ENCODE measurements at regions of chr1 and their contacts with region 1.

Region 1: GRCh38 chr1:115609021-115609420 is 32.7 kb upstream of the VANGL1 start:
- DNase-seq: no peak
- ATAC-seq: no peak
- H3K4me3 ChIP-seq: no peak overlapping the region
- H3K27ac ChIP-seq: no peak overlapping the region
- H3K4me1 ChIP-seq: no peaks in the 10 kb centered on the region
- H3K27me3 ChIP-seq: no peaks in the 10 kb centered on the region; the same call in 1 of the 2 replicates
- CTCF ChIP-seq: no peak

Region 2: GRCh38 chr1:115706587-115707425 is 97.8 kb after region 1 on chr1:
- CTCF ChIA-PET with region 1: interaction called, 15 read pairs
- POLR2A ChIA-PET with region 1: no interaction called
- in situ Hi-C with region 1: no loop called
- intact Hi-C with region 1: loop called (anchors 10 kb)
- DNase-seq: no peak
- ATAC-seq: no peak
- H3K4me3 ChIP-seq: no peak overlapping the region
- H3K27ac ChIP-seq: no peak overlapping the region
- H3K4me1 ChIP-seq: no peaks in the 10 kb centered on the region
- H3K27me3 ChIP-seq: no peaks in the 10 kb centered on the region
- CTCF ChIP-seq: peak; percentile 78

Region 3: DNA sequence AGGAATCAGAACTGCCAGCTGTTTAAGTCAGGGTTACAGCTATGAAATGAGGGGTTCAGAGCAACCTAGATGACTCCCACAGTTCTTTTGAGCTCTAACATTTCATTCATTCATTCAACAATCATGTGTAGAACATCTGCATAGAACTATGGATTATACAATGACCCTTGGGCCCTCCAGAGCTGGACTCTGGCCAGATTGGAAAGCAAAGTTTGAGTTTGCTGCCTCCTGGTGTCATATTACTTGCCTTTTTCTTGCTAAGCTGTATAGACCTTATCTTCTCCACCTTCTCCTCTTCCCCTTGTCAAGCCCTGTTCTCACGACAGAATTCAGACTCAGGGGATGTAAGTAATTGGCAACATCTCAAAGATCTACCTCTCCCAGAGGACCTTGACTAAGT is 155.5 kb after region 1 on chr1:
- CTCF ChIA-PET with region 1: interaction called, 20 read pairs
- POLR2A ChIA-PET with region 1: no interaction called
- in situ Hi-C with region 1: no loop called
- intact Hi-C with region 1: loop called (anchors 2 kb)
- DNase-seq: no peak
- ATAC-seq: no peak
- H3K4me3 ChIP-seq: no peak overlapping the region
- H3K27ac ChIP-seq: no peak overlapping the region
- H3K4me1 ChIP-seq: no peaks in the 10 kb centered on the region
- H3K27me3 ChIP-seq: no peaks in the 10 kb centered on the region
- CTCF ChIP-seq: peak; percentile 27

Region 4: GRCh38 chr1:115771847-115772457 is 162.9 kb after region 1 on chr1:
- CTCF ChIA-PET with region 1: interaction called, 10 read pairs
- POLR2A ChIA-PET with region 1: no interaction called
- in situ Hi-C with region 1: no loop called
- intact Hi-C with region 1: no loop called
- DNase-seq: peak; percentile 54
- ATAC-seq: peak; percentile 96
- H3K4me3 ChIP-seq: peak overlapping the region in 1 of 2 experiments; percentile 24; a peak in 1 of 4 replicates
- H3K27ac ChIP-seq: no peak overlapping the region
- H3K4me1 ChIP-seq: no peaks in the 10 kb centered on the region
- H3K27me3 ChIP-seq: peaks cover 3% of the 10 kb centered on the region; the same call in 1 of the 2 replicates
- CTCF ChIP-seq: peak; percentile 73

Measured in Panc1 (cell line).